Ascending aorta (tissue), 2 donors: ENCODE measurements at regions of chr17 and their contacts with region 1.

Region 1: GRCh38 chr17:2392252-2393173 is 8.3 kb downstream of the MNT start:
- DNase-seq: peak; percentile 74 to 98
- H3K4me3 ChIP-seq: peak overlapping the region; percentile 68 to 77
- H3K27ac ChIP-seq: peak overlapping the region; percentile 98 to 99
- H3K4me1 ChIP-seq: peaks cover 28 to 54% of the 10 kb centered on the region in 2 donors
- H3K27me3 ChIP-seq: no peaks in the 10 kb centered on the region
- CTCF ChIP-seq: no peak

Region 2: GRCh38 chr17:2303204-2304188 is 89.0 kb before region 1 on chr17 and contains the starts of genes SMG6 and SRR:
- intact Hi-C with region 1: loop called (anchors 5 kb)
- DNase-seq: peak; percentile 53 to 95
- H3K4me3 ChIP-seq: peak within 1 kb of the TSS; percentile 83 to 99
- H3K27ac ChIP-seq: peak within 1 kb of the TSS; percentile 84 to 87
- H3K4me1 ChIP-seq: peaks cover 0 to 18% of the 10 kb centered on the region in 2 donors
- H3K27me3 ChIP-seq: no peaks in the 10 kb centered on the region
- CTCF ChIP-seq: no peak
- total RNA-seq, gene SMG6: 50.8 TPM
- total RNA-seq, gene SRR: not detected

Region 3: DNA sequence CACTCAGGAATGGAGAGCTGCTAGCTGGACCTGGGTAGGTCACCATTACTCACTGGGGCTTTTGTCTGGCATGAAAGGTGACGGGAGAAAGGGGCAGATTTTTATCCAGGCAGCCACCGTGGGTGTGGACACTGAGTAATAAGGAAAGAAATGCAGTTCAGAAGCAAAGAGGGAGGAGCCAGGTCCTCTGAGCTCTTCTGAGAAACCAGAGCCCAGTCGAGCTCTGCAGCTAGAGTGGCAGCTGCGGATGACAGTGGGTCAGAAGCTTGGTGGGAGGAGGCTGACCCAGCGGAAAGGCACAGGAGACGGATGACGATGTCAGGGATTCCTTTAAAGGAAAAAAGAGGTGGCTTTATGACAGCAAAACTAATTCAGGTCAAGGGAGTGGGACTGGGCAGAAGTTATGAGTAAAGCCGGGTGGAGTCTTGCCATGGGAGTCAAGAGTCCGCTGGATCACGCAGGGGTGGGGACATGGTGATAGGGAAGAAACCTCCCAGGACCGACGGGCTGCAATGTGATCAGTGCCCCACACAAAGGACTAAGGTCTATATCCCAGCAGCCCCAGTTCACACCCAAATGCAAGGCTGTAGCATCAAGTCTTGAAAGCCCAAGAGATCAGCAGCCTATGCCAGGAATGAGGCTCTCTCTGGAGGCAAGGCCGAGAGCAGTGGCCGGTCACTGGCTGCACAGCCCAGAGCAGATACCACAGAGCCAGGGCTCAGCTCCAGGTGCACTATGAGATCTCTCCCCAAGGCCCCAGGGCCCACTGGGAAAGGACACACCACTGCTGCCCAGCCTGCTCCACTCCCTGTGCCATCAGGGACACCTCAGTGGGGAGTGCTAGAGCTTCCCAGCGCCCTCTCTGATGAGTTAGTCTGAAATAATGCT is 14.6 kb after region 1 on chr17:
- intact Hi-C with region 1: loop called (anchors 1 kb)
- DNase-seq: peak; percentile 80 to 95
- H3K4me3 ChIP-seq: peak overlapping the region in 1 of 2 donors; percentile 2
- H3K27ac ChIP-seq: peak overlapping the region; percentile 89 to 97
- H3K4me1 ChIP-seq: peaks cover 13 to 49% of the 10 kb centered on the region in 2 donors
- H3K27me3 ChIP-seq: no peaks in the 10 kb centered on the region
- CTCF ChIP-seq: no peak

Region 4: GRCh38 chr17:2416010-2416734 is 23.7 kb after region 1 on chr17:
- intact Hi-C with region 1: loop called (anchors 1 kb)
- DNase-seq: peak; percentile 68 to 97
- H3K4me3 ChIP-seq: no peak overlapping the region
- H3K27ac ChIP-seq: peak overlapping the region; percentile 4 to 71
- H3K4me1 ChIP-seq: peaks cover 3 to 19% of the 10 kb centered on the region in 2 donors
- H3K27me3 ChIP-seq: no peaks in the 10 kb centered on the region
- CTCF ChIP-seq: peak; percentile 89 to 95 (median 95)

Region 5: DNA sequence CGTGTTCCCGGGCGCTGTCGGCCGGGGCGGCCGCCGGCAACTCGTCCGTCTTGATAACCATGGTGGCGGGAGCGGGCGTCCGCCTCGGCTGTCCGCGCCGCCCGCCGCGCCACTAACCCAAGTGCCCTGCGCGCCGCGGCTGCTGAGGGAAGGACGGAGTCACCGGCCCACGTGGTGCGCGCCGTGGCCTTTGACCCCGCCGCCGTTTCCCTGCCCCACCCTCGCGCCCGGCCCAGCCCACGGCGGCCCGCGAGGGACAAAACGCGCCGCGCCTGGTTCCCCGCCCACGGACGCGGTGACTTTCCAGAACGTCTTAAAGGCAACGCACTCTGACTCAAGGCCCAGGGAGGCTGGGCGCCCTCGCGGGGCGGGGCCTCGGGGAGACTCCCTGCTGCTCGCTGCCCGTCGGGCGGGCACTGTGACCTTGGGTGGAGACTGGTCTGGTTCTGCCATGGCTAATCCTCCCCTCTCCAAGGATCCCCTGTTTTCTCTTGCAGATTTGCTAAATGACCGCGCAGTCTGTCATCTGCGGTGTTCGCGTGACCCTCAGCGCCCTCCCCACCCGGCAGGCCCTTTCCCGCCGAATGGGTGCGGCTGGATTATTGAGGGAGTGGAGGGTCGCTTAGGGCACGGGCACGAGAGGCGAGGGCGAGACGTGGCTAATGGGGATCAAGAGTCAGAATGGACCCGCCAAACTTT is 319.2 kb after region 1 on chr17 and contains the start of gene CLUH:
- intact Hi-C with region 1: loop called (anchors 5 kb)
- DNase-seq: peak; percentile 92 to 98
- H3K4me3 ChIP-seq: peak within 1 kb of the TSS; percentile 77 to 95
- H3K27ac ChIP-seq: peak within 1 kb of the TSS; percentile 56 to 71
- H3K4me1 ChIP-seq: peaks cover 24 to 44% of the 10 kb centered on the region in 2 donors
- H3K27me3 ChIP-seq: no peaks in the 10 kb centered on the region
- CTCF ChIP-seq: no peak
- total RNA-seq, gene CLUH: 58.1 TPM